Posterior cingulate gyrus (tissue), 11 donors: ENCODE measurements at regions of chr10 and their contacts with region 1.

Region 1: DNA sequence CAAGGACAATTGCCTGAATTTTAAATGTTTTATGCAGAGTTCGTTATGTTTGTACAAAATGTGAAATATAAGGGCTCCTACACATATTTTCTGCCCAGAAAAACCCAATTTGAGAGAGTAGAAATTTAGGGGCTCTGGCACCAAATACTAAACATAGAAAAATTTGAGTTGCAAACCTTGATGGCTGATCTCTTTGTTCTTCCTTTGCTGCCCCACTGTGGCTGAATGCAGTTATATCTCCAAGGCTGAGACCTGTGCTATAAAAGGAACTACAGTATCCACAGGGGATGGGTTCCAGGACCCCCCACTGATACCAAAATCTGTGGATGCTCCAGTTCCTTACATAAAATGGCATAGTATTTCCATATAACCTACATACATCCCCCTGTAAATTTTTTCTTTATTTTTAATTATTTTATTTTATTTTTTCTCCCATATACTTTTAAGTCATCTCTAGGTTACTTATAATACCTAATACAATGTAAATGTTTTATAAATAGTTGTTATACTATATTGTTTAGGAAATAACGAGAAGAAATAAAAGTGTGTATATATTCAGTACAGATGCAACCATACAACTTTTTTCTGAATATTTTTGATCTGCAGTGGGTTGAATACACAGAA is 22.5 kb downstream of the CFAP43 start:
- DNase-seq: peak in 6 of 10 donors; percentile 16 to 69 (median 58)

Region 2: GRCh38 chr10:103696411-103697145 is 513.1 kb before region 1 on chr10:
- intact Hi-C with region 1: no loop called
- DNase-seq: peak in 7 of 10 donors; percentile 39 to 91 (median 56)

Region 3: GRCh38 chr10:103859161-103860086 is 350.3 kb before region 1 on chr10:
- intact Hi-C with region 1: no loop called
- DNase-seq: peak in 5 of 10 donors; percentile 63 to 87 (median 72)

Region 4: GRCh38 chr10:104045151-104046089 is 164.3 kb before region 1 on chr10:
- intact Hi-C with region 1: loop called (anchors 1 kb)
- DNase-seq: peak in 6 of 10 donors; percentile 57 to 92 (median 65)